Cardiac septum (tissue), 1 donor: ENCODE measurements at regions of chr1 and their contacts with region 1.

Region 1: GRCh38 chr1:239898062-239898730 is 193.5 kb upstream of the FMN2 start:
- DNase-seq: peak; percentile 90

Region 2: GRCh38 chr1:239413916-239414315 is 484.3 kb before region 1 on chr1:
- intact Hi-C with region 1: loop called (anchors 5 kb)
- DNase-seq: no peak

Region 3: DNA sequence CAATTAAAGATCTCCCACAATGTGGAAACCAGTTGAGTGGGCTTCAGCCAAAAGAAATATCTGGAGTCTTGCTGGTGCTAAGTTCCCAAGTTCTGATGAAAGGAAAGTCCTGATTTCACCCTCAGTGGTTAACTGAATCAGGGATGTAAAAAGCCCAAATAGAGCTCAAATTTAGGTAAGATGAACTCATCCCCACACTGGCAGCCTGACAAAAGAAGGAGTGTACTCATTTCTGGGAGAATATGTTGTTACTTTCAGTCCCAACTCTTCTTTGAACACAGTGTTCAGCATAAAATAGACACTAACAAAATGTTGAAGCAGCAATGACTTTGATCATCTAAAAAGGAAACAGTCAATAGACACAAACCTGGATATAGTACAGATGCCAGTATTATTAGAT is 420.1 kb before region 1 on chr1:
- intact Hi-C with region 1: loop called (anchors 10 kb)
- DNase-seq: no peak